ENCODE measurements at regions of chr3 and their contacts with region 1.

Region 1: GRCh38 chr3:87503900-87504508 is 227.6 kb upstream of the POU1F1 start:
- DNase-seq: peak; percentile 29
- H3K4me3 ChIP-seq: no peak overlapping the region
- H3K27ac ChIP-seq: no peak overlapping the region
- H3K4me1 ChIP-seq: no peaks in the 10 kb centered on the region
- H3K27me3 ChIP-seq: no peaks in the 10 kb centered on the region
- CTCF ChIP-seq: peak; percentile 49

Region 2: DNA sequence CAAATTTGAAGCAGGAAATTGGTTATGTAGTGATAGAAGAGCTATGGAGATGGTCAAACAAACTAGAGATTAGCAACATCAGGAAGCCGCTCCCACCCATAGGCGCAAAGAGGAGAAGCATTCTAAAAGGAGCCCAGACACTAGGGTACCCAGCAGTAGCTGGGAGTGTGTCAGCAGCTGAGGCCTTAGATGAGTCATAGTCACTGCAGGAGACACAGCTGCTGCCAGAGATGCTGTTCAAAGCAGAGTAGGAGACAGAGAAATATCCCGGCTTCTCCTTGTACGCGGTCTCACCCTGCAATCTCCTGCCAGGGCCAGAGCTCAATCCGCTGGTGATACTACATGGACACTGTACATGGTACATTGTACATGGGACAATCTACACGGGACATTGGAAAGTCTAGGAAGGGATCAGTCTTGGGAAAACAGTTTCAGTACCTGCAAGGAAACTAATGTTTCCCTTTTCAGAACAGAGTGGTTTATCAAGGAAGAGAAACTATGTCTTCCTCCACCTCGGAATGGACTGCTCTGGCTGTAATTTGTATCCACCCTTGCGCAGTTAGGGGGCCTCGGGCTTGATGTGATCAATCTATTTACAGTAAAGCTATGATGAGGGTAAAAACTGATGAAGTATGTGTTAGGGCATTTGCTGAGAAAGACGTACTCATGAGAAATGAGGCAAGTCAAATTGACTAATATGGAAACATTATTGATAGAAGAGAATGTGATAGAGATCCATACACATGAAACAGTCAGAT is 574.8 kb before region 1 on chr3:
- intact Hi-C with region 1: no loop called
- DNase-seq: no peak
- H3K4me3 ChIP-seq: no peak overlapping the region
- H3K27ac ChIP-seq: no peak overlapping the region
- H3K4me1 ChIP-seq: no peaks in the 10 kb centered on the region
- H3K27me3 ChIP-seq: no peaks in the 10 kb centered on the region
- CTCF ChIP-seq: no peak

Region 3: GRCh38 chr3:87298111-87298718 is 205.8 kb before region 1 on chr3:
- intact Hi-C with region 1: loop called (anchors 5 kb)
- DNase-seq: no peak
- H3K4me3 ChIP-seq: no peak overlapping the region
- H3K27ac ChIP-seq: no peak overlapping the region
- H3K4me1 ChIP-seq: no peaks in the 10 kb centered on the region
- H3K27me3 ChIP-seq: no peaks in the 10 kb centered on the region
- CTCF ChIP-seq: peak; percentile 63

Region 4: GRCh38 chr3:87350364-87351199 is 153.4 kb before region 1 on chr3:
- intact Hi-C with region 1: loop called (anchors 5 kb)
- DNase-seq: peak; percentile 25
- H3K4me3 ChIP-seq: no peak overlapping the region
- H3K27ac ChIP-seq: no peak overlapping the region
- H3K4me1 ChIP-seq: no peaks in the 10 kb centered on the region
- H3K27me3 ChIP-seq: no peaks in the 10 kb centered on the region
- CTCF ChIP-seq: peak; percentile 83

Region 5: GRCh38 chr3:87468938-87469337 is 35.1 kb before region 1 on chr3:
- intact Hi-C with region 1: no loop called
- DNase-seq: no peak
- H3K4me3 ChIP-seq: no peak overlapping the region
- H3K27ac ChIP-seq: no peak overlapping the region
- H3K4me1 ChIP-seq: no peaks in the 10 kb centered on the region
- H3K27me3 ChIP-seq: no peaks in the 10 kb centered on the region
- CTCF ChIP-seq: no peak

Region 6: DNA sequence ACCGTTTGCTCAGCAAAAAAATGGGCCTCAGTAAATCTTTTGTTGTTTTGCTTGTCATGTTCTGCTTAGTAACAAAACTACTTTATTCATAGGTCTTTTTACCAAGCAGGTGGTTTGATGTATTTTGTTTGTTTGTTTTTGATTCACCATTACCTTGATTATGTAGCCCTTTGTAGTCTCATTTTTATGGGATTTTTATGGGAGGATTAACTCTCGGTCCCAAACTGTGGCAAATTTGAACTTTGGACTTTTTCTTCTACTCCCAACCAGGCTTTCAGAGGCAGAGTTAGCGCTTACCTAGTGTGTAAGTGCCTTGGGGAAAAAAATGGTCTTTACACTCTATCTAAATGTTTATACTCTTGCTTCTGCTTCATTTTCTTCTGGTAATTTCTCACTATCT is 49.1 kb after region 1 on chr3:
- intact Hi-C with region 1: no loop called
- DNase-seq: no peak
- H3K4me3 ChIP-seq: no peak overlapping the region
- H3K27ac ChIP-seq: no peak overlapping the region
- H3K4me1 ChIP-seq: no peaks in the 10 kb centered on the region
- H3K27me3 ChIP-seq: no peaks in the 10 kb centered on the region
- CTCF ChIP-seq: no peak

Region 7: DNA sequence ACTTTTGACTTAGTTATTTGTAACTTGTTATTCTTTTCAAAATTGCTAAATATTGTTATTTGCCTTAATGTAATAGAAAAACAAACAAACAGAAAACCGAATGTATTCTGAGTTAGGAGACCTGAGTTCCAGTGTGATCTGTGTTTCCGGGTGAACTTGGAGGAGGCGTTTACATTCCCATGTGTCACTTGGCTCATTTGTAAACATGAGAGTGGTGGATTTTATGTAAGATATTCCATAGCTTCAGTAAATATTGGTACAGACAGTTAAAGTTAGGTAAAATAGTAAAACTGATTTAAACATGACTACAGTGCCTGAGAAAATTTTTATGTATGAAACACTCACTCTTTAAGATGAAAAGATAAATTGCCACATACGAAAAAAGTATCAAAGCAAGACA is 59.7 kb after region 1 on chr3:
- intact Hi-C with region 1: no loop called
- DNase-seq: no peak
- H3K4me3 ChIP-seq: no peak overlapping the region
- H3K27ac ChIP-seq: no peak overlapping the region
- H3K4me1 ChIP-seq: no peaks in the 10 kb centered on the region
- H3K27me3 ChIP-seq: no peaks in the 10 kb centered on the region
- CTCF ChIP-seq: no peak